Gastrocnemius medialis (tissue), 4 donors: ENCODE measurements at regions of chr18 and their contacts with region 1.

Region 1: DNA sequence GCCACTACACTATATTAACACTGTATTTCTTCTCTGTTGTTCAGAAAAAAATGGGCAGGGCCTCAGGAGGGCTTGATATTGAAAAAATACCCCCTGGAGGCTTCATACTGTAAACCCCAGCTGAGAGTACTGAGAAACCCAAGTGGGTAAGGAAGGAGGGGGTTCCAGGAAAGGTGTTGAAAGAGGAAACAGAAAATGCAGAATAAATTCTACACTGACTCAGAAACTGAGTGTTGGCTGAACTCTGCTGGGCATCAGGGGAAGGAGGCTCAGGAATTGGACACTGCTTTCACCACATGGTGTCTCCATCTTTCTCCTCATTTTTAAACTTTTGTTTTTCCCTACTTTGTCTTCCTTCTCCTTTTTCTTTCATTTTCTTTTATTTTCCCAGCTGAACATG is 253.7 kb downstream of the DYM start:
- DNase-seq: no peak
- ATAC-seq: no peak
- H3K4me3 ChIP-seq: no peak overlapping the region
- H3K27ac ChIP-seq: no peak overlapping the region
- H3K4me1 ChIP-seq: peaks cover 0 to 4% of the 10 kb centered on the region in 2 donors
- H3K27me3 ChIP-seq: no peaks in the 10 kb centered on the region
- CTCF ChIP-seq: no peak
- POLR2A ChIP-seq: no peak

Region 2: DNA sequence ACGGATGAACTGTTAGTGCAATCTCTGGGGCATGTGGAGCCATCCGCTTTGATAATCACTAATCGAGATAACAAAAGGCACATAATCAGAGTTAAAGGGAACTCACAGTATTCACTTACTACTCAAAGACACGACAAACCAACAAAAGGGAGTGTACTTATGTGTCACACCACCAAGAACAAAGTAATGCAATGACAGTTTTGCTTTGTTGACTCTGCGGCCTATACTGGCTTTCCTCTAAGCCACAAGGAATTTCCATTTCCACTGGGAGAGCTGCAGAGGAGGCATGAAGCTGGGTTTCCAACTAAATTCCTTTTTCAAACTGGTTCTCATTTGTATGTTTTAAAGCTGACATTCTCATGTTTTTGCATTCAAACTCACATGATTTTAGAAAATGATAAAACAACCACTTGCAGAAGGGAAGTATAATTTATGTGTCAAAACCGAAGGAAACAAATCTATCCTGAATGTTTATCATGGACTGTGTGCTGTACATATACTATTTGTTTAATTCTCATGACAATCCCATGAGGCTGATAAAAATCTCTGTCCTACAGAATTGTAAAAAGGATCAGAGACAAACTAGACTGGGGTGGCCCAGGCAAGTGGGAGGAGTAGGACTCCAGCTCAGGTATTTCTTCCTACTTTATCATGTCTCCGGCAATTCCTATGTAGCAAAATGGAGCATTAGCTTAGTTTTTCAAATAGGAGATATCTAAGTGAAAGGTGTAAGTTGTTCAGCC is 106.3 kb before region 1 on chr18:
- in situ Hi-C with region 1: loop called in 1 of 4 experiments (anchors 25 kb)
- intact Hi-C with region 1: no loop called
- DNase-seq: no peak
- ATAC-seq: no peak
- H3K4me3 ChIP-seq: no peak overlapping the region
- H3K27ac ChIP-seq: no peak overlapping the region
- H3K4me1 ChIP-seq: no peaks in the 10 kb centered on the region
- H3K27me3 ChIP-seq: no peaks in the 10 kb centered on the region
- CTCF ChIP-seq: no peak
- POLR2A ChIP-seq: no peak